HepG2 (cell line): ENCODE measurements at regions of chr16 and their contacts with region 1.

Region 1: DNA sequence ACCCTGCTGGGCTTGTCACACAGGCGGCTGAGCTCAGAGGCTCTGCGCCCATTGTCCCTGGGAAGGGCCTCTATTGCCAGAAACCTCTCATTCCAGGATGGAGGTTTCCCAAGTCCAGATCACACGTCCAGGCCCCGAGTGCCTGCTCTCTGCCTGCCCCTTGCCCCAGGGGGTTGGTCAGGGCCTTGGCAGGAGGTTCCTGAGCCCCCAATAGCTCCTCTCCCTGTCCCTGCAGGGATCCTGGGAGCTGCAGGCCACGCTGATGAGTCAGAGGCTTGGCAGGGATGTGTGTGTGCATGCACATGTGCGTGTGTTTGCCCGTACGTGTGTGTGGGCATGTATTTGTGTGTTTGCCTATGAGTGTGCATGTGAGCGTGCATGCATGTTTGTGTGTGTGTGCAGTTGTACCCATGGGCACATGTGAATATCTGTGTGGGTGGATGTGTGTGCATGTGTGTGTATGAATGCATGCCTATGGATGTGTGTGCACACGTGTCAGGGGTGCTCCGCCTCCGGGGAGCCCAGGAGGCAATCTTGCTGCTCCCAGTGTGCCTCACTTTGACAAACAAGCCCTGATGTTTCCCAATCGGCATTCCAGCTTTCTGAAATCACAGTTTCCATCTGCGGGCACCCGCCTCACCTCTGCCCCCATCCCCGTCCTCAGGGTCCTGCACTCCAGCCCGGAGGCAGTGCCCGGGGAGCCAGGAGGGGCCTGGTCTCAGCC is 98.4 kb upstream of the GSE1 start:
- DNase-seq: peak; percentile 99
- ATAC-seq: peak; percentile 79
- H3K4me3 ChIP-seq: peak overlapping the region; percentile 55 to 73 (median 61); a peak in 5 of 6 replicates
- H3K27ac ChIP-seq: peak overlapping the region; percentile 91
- H3K4me1 ChIP-seq: peaks cover 45% of the 10 kb centered on the region
- H3K27me3 ChIP-seq: no peaks in the 10 kb centered on the region
- CTCF ChIP-seq: peak; percentile 63
- EP300 ChIP-seq: peak; percentile 92 to 97
- POLR2A ChIP-seq: peak in 1 of 2 experiments; percentile 40; a peak in 2 of 4 replicates
- RAD21 ChIP-seq: peak; percentile 74

Region 2: GRCh38 chr16:85448557-85449197 is 66.1 kb before region 1 on chr16:
- CTCF ChIA-PET with region 1: no interaction called
- POLR2A ChIA-PET with region 1: interaction called, 11 read pairs
- in situ Hi-C with region 1: no loop called
- intact Hi-C with region 1: no loop called
- DNase-seq: peak; percentile 79
- ATAC-seq: peak; percentile 91
- H3K4me3 ChIP-seq: peak overlapping the region in 2 of 3 experiments; percentile 21 to 59; a peak in 3 of 6 replicates
- H3K27ac ChIP-seq: peak overlapping the region; percentile 68
- H3K4me1 ChIP-seq: peaks cover 59% of the 10 kb centered on the region
- H3K27me3 ChIP-seq: peaks cover 5 to 59% of the 10 kb centered on the region in 2 experiments
- CTCF ChIP-seq: peak; percentile 44; the same call in 1 of the 2 replicates
- EP300 ChIP-seq: peak in 1 of 2 experiments; percentile 85; a peak in 2 of 4 replicates
- POLR2A ChIP-seq: no peak
- RAD21 ChIP-seq: peak; percentile 20; the same call in 1 of the 2 replicates

Region 3: DNA sequence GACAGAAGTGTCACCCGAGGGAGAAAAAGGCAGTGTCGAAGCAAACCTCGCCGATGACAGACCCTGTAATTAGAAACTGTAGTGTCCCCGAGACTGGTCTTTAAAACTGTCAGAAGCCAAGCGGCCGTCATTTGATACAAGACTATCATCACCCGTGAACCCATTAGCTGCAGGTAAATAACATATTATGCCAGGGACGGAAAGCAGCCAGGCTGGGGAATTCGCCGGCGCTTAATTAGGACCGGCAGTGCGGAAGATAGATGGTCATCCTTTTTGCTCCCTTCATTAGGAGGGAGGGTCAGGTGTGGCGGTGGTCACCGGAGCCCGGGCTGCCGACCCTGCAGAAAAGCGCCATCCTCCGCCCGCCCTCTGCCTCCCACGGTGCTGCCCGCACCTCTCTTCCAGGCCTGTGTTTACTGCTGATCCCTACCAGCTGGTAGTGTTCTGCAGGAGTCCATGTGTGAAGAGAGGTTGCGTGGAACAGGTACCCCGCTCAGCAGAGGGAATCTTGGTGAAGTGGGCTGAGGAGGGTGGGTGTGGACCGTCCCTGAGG is 11.0 kb before region 1 on chr16:
- CTCF ChIA-PET with region 1: no interaction called
- POLR2A ChIA-PET with region 1: interaction called, 21 read pairs
- in situ Hi-C with region 1: no loop called
- intact Hi-C with region 1: no loop called
- DNase-seq: no peak
- ATAC-seq: no peak
- H3K4me3 ChIP-seq: no peak overlapping the region
- H3K27ac ChIP-seq: no peak overlapping the region
- H3K4me1 ChIP-seq: peaks cover 16% of the 10 kb centered on the region
- H3K27me3 ChIP-seq: no peaks in the 10 kb centered on the region; a peak in 1 of 5 replicates
- CTCF ChIP-seq: no peak
- EP300 ChIP-seq: no peak
- POLR2A ChIP-seq: no peak
- RAD21 ChIP-seq: no peak

Region 4: GRCh38 chr16:85536073-85536410 is 21.3 kb after region 1 on chr16:
- CTCF ChIA-PET with region 1: no interaction called
- POLR2A ChIA-PET with region 1: interaction called, 205 read pairs
- in situ Hi-C with region 1: no loop called
- intact Hi-C with region 1: loop called (anchors 1 kb)
- DNase-seq: no peak
- ATAC-seq: no peak
- H3K4me3 ChIP-seq: peak overlapping the region; percentile 35 to 74 (median 51); a peak in 5 of 6 replicates
- H3K27ac ChIP-seq: peak overlapping the region; percentile 90
- H3K4me1 ChIP-seq: peaks cover 100% of the 10 kb centered on the region
- H3K27me3 ChIP-seq: no peaks in the 10 kb centered on the region
- CTCF ChIP-seq: no peak
- EP300 ChIP-seq: no peak
- POLR2A ChIP-seq: no peak
- RAD21 ChIP-seq: no peak

Region 5: GRCh38 chr16:85554112-85554813 is 39.5 kb after region 1 on chr16:
- CTCF ChIA-PET with region 1: no interaction called
- POLR2A ChIA-PET with region 1: interaction called, 127 read pairs
- in situ Hi-C with region 1: loop called (anchors 5 kb)
- intact Hi-C with region 1: loop called (anchors 1 kb)
- DNase-seq: peak; percentile 56
- ATAC-seq: peak; percentile 26
- H3K4me3 ChIP-seq: peak overlapping the region; percentile 75 to 82 (median 81)
- H3K27ac ChIP-seq: peak overlapping the region; percentile 80
- H3K4me1 ChIP-seq: peaks cover 60% of the 10 kb centered on the region
- H3K27me3 ChIP-seq: no peaks in the 10 kb centered on the region
- CTCF ChIP-seq: no peak
- EP300 ChIP-seq: peak in 1 of 2 experiments; percentile 7; a peak in 1 of 4 replicates
- POLR2A ChIP-seq: peak; percentile 36 to 48; a peak in 2 of 4 replicates
- RAD21 ChIP-seq: no peak

Region 6: GRCh38 chr16:85586380-85587104 is 71.8 kb after region 1 on chr16:
- CTCF ChIA-PET with region 1: no interaction called
- POLR2A ChIA-PET with region 1: no interaction called
- in situ Hi-C with region 1: no loop called
- intact Hi-C with region 1: no loop called
- DNase-seq: no peak
- ATAC-seq: no peak
- H3K4me3 ChIP-seq: no peak overlapping the region
- H3K27ac ChIP-seq: no peak overlapping the region
- H3K4me1 ChIP-seq: no peaks in the 10 kb centered on the region
- H3K27me3 ChIP-seq: no peaks in the 10 kb centered on the region
- CTCF ChIP-seq: no peak
- EP300 ChIP-seq: no peak
- POLR2A ChIP-seq: no peak
- RAD21 ChIP-seq: no peak

Region 7: DNA sequence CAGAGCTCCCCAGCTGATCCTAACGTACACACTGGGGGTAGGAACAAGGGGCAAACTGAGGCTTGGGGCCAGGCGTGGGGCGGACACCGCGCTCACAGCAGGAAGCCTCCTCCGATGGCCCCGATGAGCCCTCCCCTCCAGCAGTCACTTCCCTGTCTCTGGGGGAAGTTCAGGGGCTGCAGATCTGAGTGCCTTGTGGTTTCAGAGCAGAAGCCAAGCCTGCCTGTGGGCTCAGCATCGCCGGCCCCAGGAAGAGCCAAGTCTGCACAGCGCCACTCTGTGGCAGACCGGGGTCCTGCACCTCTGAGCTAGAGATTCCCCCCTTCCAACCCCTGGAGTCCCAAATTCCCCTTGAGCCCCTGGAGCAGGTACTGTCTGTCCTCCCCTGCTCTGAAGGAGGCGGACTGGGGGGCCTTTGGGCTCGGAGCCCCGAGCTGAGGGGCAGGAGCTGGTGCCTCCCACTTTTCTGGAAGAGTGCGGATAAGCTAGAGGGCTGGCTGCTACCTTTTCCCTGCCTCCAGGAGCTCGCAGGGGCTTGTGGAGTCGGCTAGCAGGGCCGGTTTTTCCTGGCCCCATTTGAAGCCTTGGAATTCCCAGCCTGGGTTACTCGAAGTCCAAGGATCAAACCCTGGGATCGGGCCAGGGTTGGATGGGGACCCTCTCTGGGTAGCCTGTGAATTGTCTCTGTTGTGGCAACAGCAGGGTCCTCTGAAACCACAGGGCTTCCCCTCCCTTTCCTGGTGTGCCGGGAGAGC is 101.3 kb after region 1 on chr16:
- CTCF ChIA-PET with region 1: no interaction called
- POLR2A ChIA-PET with region 1: interaction called, 34 read pairs
- in situ Hi-C with region 1: no loop called
- intact Hi-C with region 1: no loop called
- DNase-seq: peak; percentile 64
- ATAC-seq: peak; percentile 8
- H3K4me3 ChIP-seq: peak overlapping the region in 1 of 3 experiments; percentile 85; a peak in 4 of 6 replicates
- H3K27ac ChIP-seq: peak overlapping the region; percentile 93
- H3K4me1 ChIP-seq: peaks cover 32% of the 10 kb centered on the region
- H3K27me3 ChIP-seq: no peaks in the 10 kb centered on the region
- CTCF ChIP-seq: peak; percentile 87
- EP300 ChIP-seq: no peak
- POLR2A ChIP-seq: 0 out of 4 replicates have a peak, but pooled peaks of 1 of the 2 experiments have one; percentile 28
- RAD21 ChIP-seq: peak; percentile 70